Mammary epithelial cell (primary cell): ENCODE measurements at regions of chr10 and their contacts with region 1.

Region 1: GRCh38 chr10:68301790-68302502 is 29.9 kb upstream of the HNRNPH3 start:
- DNase-seq: peak; percentile 30
- H3K4me3 ChIP-seq: no peak overlapping the region
- H3K27ac ChIP-seq: no peak overlapping the region
- H3K4me1 ChIP-seq: no peaks in the 10 kb centered on the region
- H3K27me3 ChIP-seq: no peaks in the 10 kb centered on the region
- CTCF ChIP-seq: peak; percentile 33 to 55

Region 2: DNA sequence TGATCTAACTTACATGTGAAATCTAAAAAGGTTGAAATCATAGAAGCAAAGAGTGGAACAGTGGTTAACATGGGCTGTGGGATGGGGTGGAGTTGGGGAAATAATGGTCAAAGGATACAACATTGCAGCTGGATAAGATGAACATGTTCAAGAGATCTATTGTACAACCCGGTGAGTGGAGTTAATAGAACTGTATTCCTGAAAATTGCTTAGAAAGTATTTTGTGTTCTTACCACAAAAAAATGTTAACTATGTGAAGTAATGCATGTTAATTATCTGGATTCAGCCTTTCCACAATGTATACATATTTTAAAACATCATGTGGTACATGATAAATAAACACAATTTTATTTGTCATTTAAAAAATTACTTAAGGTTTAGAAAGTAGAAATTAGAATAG is 1647.1 kb before region 1 on chr10:
- CTCF ChIA-PET with region 1: no interaction called
- dilution Hi-C with region 1: no loop called
- in situ Hi-C with region 1: no loop called
- intact Hi-C with region 1: no loop called
- DNase-seq: no peak
- H3K4me3 ChIP-seq: no peak overlapping the region
- H3K27ac ChIP-seq: no peak overlapping the region
- H3K4me1 ChIP-seq: no peaks in the 10 kb centered on the region
- H3K27me3 ChIP-seq: no peaks in the 10 kb centered on the region
- CTCF ChIP-seq: no peak

Region 3: DNA sequence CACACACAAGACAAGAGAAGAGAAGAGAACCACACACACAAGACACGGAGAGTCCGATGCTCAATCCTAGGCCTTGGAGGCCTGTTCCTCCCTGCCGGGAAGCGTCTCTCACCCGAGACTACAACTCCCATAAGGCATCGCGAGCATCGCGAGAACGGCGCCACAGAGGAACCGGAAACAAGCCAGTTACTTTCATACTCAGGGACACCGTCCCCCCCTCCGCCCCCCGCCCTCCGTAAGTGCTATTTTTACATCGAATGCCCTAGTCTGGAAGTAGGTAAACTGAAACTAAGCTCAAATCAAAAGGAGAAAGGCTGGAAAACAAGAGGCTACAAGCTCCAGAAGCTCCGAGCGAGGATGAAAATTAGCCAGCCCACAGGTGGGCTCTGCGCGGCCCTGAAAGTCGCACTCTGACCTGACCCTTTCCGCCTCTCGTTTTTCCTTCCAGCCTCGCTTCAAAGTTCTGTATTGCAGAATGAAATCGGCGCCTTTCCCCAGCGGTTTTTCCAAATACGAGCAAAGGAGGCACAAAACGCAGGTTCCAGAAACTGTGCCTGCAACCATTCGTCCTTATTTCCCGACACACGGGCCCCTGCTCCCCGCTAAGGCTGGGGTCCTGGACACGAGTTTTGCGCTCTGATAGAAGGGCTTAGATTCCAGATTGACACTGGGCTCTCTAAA is 452.5 kb before region 1 on chr10:
- CTCF ChIA-PET with region 1: no interaction called
- dilution Hi-C with region 1: no loop called
- in situ Hi-C with region 1: loop called in 1 of 2 experiments (anchors 25 kb)
- intact Hi-C with region 1: loop called (anchors 10 kb)
- DNase-seq: peak; percentile 84
- H3K4me3 ChIP-seq: peak overlapping the region; percentile 77 to 86 (median 80)
- H3K27ac ChIP-seq: peak overlapping the region; percentile 67
- H3K4me1 ChIP-seq: no peaks in the 10 kb centered on the region
- H3K27me3 ChIP-seq: no peaks in the 10 kb centered on the region
- CTCF ChIP-seq: no peak

Region 4: GRCh38 chr10:68082872-68083271 is 219.1 kb before region 1 on chr10:
- CTCF ChIA-PET with region 1: interaction called, 4 read pairs
- dilution Hi-C with region 1: no loop called
- in situ Hi-C with region 1: loop called in 1 of 2 experiments (anchors 10 kb)
- intact Hi-C with region 1: loop called (anchors 1 kb)
- DNase-seq: no peak
- H3K4me3 ChIP-seq: no peak overlapping the region
- H3K27ac ChIP-seq: no peak overlapping the region
- H3K4me1 ChIP-seq: peaks cover 29% of the 10 kb centered on the region
- H3K27me3 ChIP-seq: no peaks in the 10 kb centered on the region
- CTCF ChIP-seq: peak; percentile 56 to 64

Region 5: GRCh38 chr10:68208424-68209042 is 93.4 kb before region 1 on chr10:
- CTCF ChIA-PET with region 1: interaction called, 33 read pairs
- dilution Hi-C with region 1: no loop called
- in situ Hi-C with region 1: loop called in 1 of 2 experiments (anchors 5 kb)
- intact Hi-C with region 1: loop called (anchors 1 kb)
- DNase-seq: peak; percentile 59
- H3K4me3 ChIP-seq: no peak overlapping the region
- H3K27ac ChIP-seq: no peak overlapping the region
- H3K4me1 ChIP-seq: no peaks in the 10 kb centered on the region
- H3K27me3 ChIP-seq: no peaks in the 10 kb centered on the region
- CTCF ChIP-seq: peak; percentile 77 to 82

Region 6: DNA sequence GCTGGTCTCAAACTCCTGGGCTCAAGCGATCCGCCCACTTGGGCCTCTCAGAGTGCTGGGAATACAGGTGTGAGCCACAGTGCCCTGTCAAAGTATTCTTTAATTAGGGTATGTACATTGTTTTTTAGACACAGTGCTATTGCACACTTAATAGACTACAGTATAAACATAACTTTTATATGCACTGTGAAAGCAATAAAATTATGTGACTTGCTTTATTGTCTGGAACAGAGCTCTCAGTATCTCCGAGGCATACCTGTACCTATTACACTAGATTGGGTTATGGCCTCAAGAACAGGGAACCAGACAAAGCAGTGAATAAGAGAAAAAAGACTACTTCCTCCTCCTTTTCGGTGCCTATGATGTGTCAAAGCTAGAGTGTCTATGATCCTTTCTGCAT is 83.2 kb before region 1 on chr10:
- CTCF ChIA-PET with region 1: no interaction called
- dilution Hi-C with region 1: no loop called
- in situ Hi-C with region 1: loop called (anchors 5 kb)
- intact Hi-C with region 1: loop called (anchors 1 kb)
- DNase-seq: no peak
- H3K4me3 ChIP-seq: no peak overlapping the region
- H3K27ac ChIP-seq: no peak overlapping the region
- H3K4me1 ChIP-seq: no peaks in the 10 kb centered on the region
- H3K27me3 ChIP-seq: no peaks in the 10 kb centered on the region
- CTCF ChIP-seq: no peak

Region 7: DNA sequence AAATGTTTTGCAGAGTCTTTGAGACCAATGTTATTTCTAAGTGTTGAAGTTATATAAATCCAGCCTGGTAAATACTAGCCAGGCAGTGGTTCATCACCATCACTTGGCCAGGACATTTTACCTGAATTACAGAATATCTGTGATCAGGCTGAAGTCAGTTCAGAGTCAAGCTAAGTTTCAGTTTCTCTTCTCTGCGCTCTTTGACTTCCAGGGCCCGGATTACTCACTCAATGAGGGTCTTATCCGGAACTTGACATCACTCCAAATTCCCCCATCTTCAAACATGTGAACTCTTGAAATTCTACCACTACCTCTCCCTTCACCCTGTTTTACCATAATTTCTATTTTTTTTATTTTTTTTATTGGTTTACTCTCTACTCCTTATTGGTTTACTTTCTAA is 382.5 kb after region 1 on chr10:
- CTCF ChIA-PET with region 1: no interaction called
- dilution Hi-C with region 1: no loop called
- in situ Hi-C with region 1: no loop called
- intact Hi-C with region 1: no loop called
- DNase-seq: no peak
- H3K4me3 ChIP-seq: no peak overlapping the region
- H3K27ac ChIP-seq: no peak overlapping the region
- H3K4me1 ChIP-seq: no peaks in the 10 kb centered on the region
- H3K27me3 ChIP-seq: no peaks in the 10 kb centered on the region
- CTCF ChIP-seq: no peak